Activated CD4-positive, alpha-beta memory T cell treated with anti-CD3 and anti-CD28 coated beads for 36 hours (primary cell): ENCODE measurements at regions of chr15 and their contacts with region 1.

Region 1: DNA sequence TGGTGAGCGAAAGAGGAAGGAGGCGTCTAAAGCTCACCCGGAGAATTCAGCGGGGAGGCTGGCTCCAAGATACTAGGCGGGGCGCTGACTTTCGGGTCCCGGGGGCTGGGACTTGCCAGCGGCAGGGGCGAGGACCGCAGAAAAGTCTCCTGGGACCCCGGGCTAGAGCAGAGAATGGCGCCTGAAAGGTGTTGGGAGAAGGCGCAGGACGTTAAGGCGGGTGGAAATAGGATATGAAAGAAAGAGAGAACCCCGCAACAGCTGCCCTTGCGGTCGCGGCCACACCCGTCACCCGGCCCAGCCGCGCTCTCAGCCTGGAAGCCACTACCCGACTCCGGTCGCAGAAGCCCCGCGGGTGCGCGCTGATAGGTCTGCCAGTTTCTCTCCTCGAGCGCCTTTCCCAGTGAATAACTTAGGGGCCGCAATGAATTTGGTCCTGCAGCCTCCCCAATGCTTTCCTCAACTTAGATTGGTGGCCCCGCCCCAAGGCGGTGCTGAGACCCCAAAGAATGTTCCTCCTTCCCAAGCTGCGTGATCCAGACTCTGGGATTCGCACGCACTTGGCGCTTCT is 602 bp downstream of the LTK start:
- DNase-seq: peak; percentile 51
- H3K4me3 Mint-ChIP-seq: peak overlapping the region; percentile 52
- H3K27ac Mint-ChIP-seq: no peak overlapping the region
- H3K4me1 Mint-ChIP-seq: peaks cover 22% of the 10 kb centered on the region
- H3K27me3 Mint-ChIP-seq: peaks cover 25% of the 10 kb centered on the region

Region 2: GRCh38 chr15:41501931-41502794 is 10.9 kb before region 1 on chr15:
- CTCF ChIA-PET with region 1: no interaction called
- POLR2A ChIA-PET with region 1: no interaction called
- intact Hi-C with region 1: loop called (anchors 1 kb)
- DNase-seq: peak; percentile 63
- H3K4me3 Mint-ChIP-seq: peak overlapping the region; percentile 35
- H3K27ac Mint-ChIP-seq: no peak overlapping the region
- H3K4me1 Mint-ChIP-seq: peaks cover 19% of the 10 kb centered on the region
- H3K27me3 Mint-ChIP-seq: peaks cover 39% of the 10 kb centered on the region

Region 3: DNA sequence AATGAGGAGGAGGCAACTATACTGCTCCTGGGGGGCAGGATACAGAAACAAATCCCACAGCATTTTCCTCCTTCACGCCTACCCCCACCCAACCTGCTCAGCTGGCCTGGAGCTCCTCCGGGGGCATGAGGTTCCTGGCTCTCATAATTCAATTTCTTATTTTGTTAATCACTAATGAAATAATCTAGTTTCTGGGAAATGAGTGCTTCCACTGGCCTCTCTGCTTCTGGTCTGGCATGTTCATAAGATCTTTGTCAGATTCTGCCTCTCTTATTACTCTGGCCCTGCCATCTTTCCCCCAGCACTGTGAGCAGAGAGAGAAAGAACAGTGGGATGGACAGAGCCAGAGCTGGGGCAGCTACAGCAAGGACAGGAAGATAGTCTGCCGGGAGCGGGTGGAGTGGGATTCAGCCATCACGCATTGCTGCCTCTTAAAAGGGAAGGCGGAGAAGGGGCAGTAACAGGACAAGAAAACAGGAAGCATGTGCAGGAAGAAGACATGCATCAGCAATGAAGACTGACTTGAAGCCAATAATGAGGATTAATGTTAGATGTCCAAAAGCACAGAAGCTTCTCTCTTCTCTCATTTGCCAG is 17.4 kb after region 1 on chr15:
- CTCF ChIA-PET with region 1: no interaction called
- POLR2A ChIA-PET with region 1: no interaction called
- intact Hi-C with region 1: no loop called
- DNase-seq: no peak
- H3K4me3 Mint-ChIP-seq: no peak overlapping the region
- H3K27ac Mint-ChIP-seq: no peak overlapping the region
- H3K4me1 Mint-ChIP-seq: no peaks in the 10 kb centered on the region
- H3K27me3 Mint-ChIP-seq: no peaks in the 10 kb centered on the region

Region 4: DNA sequence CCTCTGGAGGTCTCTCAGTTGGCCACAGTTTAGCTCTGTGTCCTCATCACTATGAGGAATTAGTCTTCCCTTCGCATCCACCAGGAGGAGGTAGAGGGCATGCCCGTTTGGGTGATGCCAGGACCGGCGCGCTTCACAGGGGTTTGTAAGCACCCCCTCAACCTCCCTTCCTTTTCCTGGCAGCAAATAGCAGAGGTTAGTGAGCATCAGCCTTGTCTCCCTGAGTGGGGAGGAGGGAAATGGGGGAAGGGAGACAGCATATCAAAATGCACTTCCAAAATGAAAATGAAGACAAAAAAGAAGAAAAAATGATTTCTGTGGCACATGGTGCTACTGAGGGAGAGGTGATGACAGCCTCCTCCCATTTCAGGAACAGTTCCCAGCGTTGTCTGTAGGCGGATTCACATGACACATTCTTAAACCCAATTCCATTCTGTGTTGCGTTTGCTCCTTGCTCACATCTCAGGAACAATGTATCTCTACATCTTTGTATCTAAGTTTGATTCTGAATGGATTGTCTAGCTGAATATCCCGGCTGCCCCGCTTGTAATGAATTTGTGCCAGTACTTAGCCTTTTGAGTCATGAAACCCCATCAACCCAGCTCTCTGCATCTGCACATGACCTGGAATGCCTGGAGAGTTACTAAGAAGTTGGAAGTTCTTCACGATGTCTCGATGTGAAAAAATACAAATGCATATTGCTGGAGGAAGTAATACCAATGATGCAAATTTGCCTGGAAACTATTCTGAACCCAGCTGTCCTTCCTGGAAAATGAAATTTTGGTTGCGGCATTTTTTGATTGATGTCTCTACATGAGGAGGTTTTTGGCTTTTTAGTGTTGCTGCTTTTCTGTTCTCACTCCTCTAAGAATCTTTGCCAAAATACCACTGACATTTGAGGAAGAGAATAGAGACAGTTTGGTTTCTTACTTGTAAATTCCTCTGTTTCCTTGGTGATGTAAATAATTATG is 91.2 kb after region 1 on chr15:
- CTCF ChIA-PET with region 1: no interaction called
- POLR2A ChIA-PET with region 1: no interaction called
- intact Hi-C with region 1: no loop called
- DNase-seq: peak; percentile 64
- H3K4me3 Mint-ChIP-seq: peak overlapping the region; percentile 60
- H3K27ac Mint-ChIP-seq: no peak overlapping the region
- H3K4me1 Mint-ChIP-seq: peaks cover 11% of the 10 kb centered on the region
- H3K27me3 Mint-ChIP-seq: peaks cover 10% of the 10 kb centered on the region